Activated CD4-positive, alpha-beta T cell treated with anti-CD3 and anti-CD28 coated beads for 36 hours (primary cell): ENCODE measurements at regions of chr10 and their contacts with region 1.

Region 1: DNA sequence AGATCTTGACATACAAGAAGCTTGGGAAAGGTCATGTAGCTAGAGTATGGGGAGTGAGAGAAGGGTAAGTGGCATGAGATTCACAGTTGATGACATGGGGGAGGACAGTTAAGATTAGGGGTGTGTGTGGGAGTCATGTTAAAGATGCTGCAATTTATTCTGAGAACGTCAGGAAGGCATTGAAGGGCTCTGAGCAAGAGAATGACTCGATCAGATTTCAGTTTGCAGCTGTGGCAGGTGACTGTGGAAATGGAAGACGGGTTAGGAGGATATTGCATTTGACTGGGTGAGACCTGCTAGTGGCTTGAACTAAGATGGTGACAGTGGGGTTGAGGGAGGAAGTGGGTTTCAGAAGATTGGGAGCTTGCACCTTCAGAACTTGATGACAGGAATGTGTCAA is 5.6 kb downstream of the CDC123 start:
- DNase-seq: peak; percentile 37
- ATAC-seq: peak; percentile 81
- H3K4me3 Mint-ChIP-seq: no peak overlapping the region
- H3K27ac Mint-ChIP-seq: peak overlapping the region; percentile 67
- H3K4me1 Mint-ChIP-seq: peaks cover 36% of the 10 kb centered on the region
- H3K27me3 Mint-ChIP-seq: no peaks in the 10 kb centered on the region

Region 2: GRCh38 chr10:12241810-12242529 is 40.4 kb after region 1 on chr10:
- CTCF ChIA-PET with region 1: no interaction called
- POLR2A ChIA-PET with region 1: no interaction called
- intact Hi-C with region 1: loop called in 1 of 2 experiments (anchors 5 kb)
- DNase-seq: peak; percentile 85
- ATAC-seq: peak; percentile 95
- H3K4me3 Mint-ChIP-seq: peak overlapping the region; percentile 54
- H3K27ac Mint-ChIP-seq: peak overlapping the region; percentile 86
- H3K4me1 Mint-ChIP-seq: peaks cover 31% of the 10 kb centered on the region
- H3K27me3 Mint-ChIP-seq: no peaks in the 10 kb centered on the region